ENCODE measurements at regions of chr4 and their contacts with region 1.

Region 1: DNA sequence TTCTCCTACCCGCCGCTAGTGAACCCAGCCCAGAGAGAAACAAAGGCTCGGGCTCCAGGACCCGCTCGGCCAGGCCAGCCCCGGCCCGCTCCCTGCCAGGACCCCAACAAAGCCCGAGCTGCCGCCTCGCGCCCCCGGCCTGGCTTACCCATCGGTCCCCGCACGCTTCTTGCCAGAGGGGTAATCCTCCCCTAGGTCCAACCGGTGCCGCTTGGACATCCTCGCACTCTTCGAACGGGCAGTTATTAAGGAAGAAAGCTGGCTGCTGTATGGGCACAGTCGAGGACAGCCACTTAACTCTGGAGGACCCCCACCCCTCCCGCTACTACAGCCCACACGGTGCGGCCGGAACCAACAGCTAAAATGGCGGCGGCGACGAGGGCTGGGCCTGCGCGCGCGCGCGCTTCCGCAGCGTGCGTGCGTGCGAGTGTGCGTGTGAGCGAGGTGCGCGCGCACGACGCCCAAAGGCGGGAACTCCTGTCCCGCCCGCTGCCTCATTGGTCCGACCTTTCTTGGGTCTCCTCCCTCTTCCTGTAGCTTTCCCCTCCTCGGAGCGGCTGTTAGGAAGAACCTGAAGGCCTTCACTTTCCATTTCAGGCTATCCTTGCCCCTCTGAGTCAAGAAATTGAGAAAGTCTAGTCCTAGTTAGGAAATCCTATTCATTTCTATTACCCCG is at the start of gene DHX15:
- DNase-seq: peak; percentile 98
- H3K4me3 Mint-ChIP-seq: peak within 1 kb of the TSS; percentile 85
- H3K27ac Mint-ChIP-seq: peak within 1 kb of the TSS; percentile 94
- H3K4me1 Mint-ChIP-seq: peaks cover 15% of the 10 kb centered on the region
- H3K27me3 Mint-ChIP-seq: no peaks in the 10 kb centered on the region
- CTCF ChIP-seq: no peak
- total RNA-seq, gene DHX15: 114 and 125 TPM in 2 replicates

Region 2: GRCh38 chr4:24557026-24558025 is 27.0 kb before region 1 on chr4:
- CTCF ChIA-PET with region 1: interaction called, 3 read pairs
- POLR2A ChIA-PET with region 1: interaction called, 12 read pairs
- intact Hi-C with region 1: no loop called
- DNase-seq: peak; percentile 45
- H3K4me3 Mint-ChIP-seq: peak overlapping the region; percentile 50
- H3K27ac Mint-ChIP-seq: peak overlapping the region; percentile 19
- H3K4me1 Mint-ChIP-seq: peaks cover 35% of the 10 kb centered on the region
- H3K27me3 Mint-ChIP-seq: no peaks in the 10 kb centered on the region
- CTCF ChIP-seq: no peak

Region 3: DNA sequence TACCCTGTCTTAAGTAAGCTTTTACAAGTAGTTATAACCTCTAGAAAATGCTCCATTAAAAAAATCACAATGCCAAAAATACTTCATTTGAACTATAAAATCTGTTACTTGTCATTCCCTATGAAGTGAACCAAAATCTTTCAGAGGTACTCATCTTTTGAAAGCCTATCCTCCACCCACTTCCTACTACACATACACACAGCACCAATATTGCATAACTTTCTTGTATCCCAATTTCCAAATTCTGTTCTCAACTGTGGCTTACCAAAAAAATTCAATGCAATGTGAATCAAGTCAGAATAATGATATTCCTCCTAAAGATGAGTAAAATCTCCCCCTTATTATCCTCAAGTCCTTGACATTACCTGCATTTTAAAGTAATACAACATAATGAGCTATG is 15.9 kb before region 1 on chr4:
- CTCF ChIA-PET with region 1: interaction called, 3 read pairs
- POLR2A ChIA-PET with region 1: interaction called, 15 read pairs
- intact Hi-C with region 1: no loop called
- DNase-seq: no peak
- H3K4me3 Mint-ChIP-seq: no peak overlapping the region
- H3K27ac Mint-ChIP-seq: no peak overlapping the region
- H3K4me1 Mint-ChIP-seq: peaks cover 40% of the 10 kb centered on the region
- H3K27me3 Mint-ChIP-seq: no peaks in the 10 kb centered on the region
- CTCF ChIP-seq: no peak

Region 4: DNA sequence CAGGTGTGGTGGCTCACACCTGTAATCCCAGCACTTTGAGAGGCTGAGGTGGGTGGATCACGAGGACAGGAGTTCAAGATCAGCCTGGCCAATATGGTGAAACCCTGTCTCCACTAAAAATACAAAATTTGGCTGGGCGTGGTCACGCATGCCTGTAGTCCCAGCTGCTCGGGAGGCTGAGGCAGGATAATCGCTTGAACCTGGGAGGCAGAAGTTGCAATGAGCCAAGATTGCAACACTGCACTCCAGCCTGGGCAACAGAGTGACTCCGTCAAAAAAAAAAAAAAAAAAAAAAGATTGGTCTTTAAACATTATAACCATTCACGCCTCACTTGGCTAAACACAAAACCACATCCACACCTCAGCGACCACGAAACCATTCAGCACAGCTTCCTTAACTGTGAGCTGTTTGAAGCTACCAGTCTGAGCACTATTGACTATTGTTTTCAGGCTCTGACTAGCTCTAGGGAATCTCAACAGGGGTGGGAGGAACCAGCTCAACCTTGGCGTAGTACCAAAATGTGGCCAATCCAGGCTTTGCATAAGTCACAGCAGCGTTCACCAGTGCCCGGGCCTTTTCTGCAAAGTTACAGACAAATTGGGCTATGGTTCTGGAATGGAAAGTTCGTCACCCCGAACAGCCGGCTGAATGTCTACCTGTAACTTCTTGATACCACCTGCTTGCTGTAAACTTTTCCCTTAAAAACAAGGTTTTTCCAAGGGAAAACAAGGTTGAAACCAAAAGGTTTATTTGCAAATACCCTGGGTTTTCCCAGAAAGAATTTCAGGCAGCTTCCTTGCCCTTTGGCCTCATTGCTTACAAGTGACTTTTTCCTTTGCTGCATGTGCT is 73.7 kb after region 1 on chr4:
- CTCF ChIA-PET with region 1: no interaction called
- POLR2A ChIA-PET with region 1: interaction called, 7 read pairs
- intact Hi-C with region 1: loop called (anchors 1 kb)
- DNase-seq: peak; percentile 94
- H3K4me3 Mint-ChIP-seq: peak overlapping the region; percentile 20
- H3K27ac Mint-ChIP-seq: peak overlapping the region; percentile 67
- H3K4me1 Mint-ChIP-seq: peaks cover 20% of the 10 kb centered on the region
- H3K27me3 Mint-ChIP-seq: peaks cover 10% of the 10 kb centered on the region
- CTCF ChIP-seq: no peak

Measured in MCF 10A (cell line).